ENCODE measurements at regions of chr1 and their contacts with region 1.

Region 1: DNA sequence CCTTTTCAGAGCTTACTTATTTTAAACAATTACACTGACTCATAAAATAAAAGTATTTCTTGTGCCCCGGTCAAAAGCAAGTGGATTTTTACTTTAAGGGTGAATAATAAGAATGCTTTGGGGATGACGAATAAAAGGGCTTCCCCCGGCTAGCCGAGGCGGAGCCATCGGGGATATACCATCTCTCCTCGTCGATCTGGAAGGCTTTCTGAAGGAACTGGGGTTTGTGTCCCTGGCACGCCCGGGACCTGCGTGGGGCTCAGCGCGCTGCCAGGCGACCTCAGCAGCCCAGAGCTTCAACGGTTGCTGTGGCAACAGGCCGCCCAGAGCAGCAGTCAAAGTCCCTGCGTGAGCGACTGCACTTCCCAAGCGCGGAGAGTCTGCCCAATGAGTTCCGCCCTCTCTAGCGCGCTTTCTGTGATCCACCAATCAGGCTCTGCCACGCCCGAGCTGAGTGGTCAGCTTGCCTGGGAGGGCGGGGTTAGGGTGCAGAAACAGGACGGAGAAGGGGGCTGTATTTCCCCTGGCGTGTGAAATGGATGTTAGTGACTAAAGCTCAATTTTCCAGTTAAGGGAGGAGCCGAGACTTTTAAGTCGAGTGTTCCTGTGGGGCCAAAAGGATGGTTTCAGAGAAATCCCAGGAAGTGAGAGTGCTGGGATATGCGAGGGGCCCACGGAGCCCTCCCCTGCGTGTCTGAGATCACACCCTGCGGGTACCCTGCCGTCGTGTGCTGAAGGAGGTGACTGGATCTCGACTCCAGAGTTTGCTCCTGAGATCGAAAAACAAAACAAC is 33.0 kb upstream of the MGST3 start:
- DNase-seq: peak; percentile 94
- H3K4me3 Mint-ChIP-seq: peak overlapping the region; percentile 86
- H3K27ac Mint-ChIP-seq: peak overlapping the region; percentile 93
- H3K4me1 Mint-ChIP-seq: peaks cover 45% of the 10 kb centered on the region
- H3K27me3 Mint-ChIP-seq: peaks cover 43% of the 10 kb centered on the region

Region 2: GRCh38 chr1:165367375-165367993 is 230.6 kb before region 1 on chr1:
- intact Hi-C with region 1: loop called (anchors 1 kb)
- DNase-seq: peak; percentile 48
- H3K4me3 Mint-ChIP-seq: no peak overlapping the region
- H3K27ac Mint-ChIP-seq: no peak overlapping the region
- H3K4me1 Mint-ChIP-seq: no peaks in the 10 kb centered on the region
- H3K27me3 Mint-ChIP-seq: peaks cover 27% of the 10 kb centered on the region

Region 3: GRCh38 chr1:165403835-165404482 is 194.1 kb before region 1 on chr1:
- intact Hi-C with region 1: loop called (anchors 1 kb)
- DNase-seq: peak; percentile 21
- H3K4me3 Mint-ChIP-seq: no peak overlapping the region
- H3K27ac Mint-ChIP-seq: no peak overlapping the region
- H3K4me1 Mint-ChIP-seq: peaks cover 4% of the 10 kb centered on the region
- H3K27me3 Mint-ChIP-seq: peaks cover 45% of the 10 kb centered on the region

Region 4: GRCh38 chr1:165630629-165631341 is 32.7 kb after region 1 on chr1 and contains the start of gene MGST3:
- intact Hi-C with region 1: loop called (anchors 1 kb)
- DNase-seq: peak; percentile 92
- H3K4me3 Mint-ChIP-seq: no peak within 1 kb of the TSS
- H3K27ac Mint-ChIP-seq: no peak within 1 kb of the TSS
- H3K4me1 Mint-ChIP-seq: peaks cover 13% of the 10 kb centered on the region
- H3K27me3 Mint-ChIP-seq: peaks cover 9% of the 10 kb centered on the region
- total RNA-seq, gene MGST3: 23.3 and 25.1 TPM in 2 replicates

Region 5: GRCh38 chr1:165768513-165769394 is 170.7 kb after region 1 on chr1 and contains the start of gene TMCO1:
- intact Hi-C with region 1: loop called (anchors 1 kb)
- DNase-seq: peak; percentile 94
- H3K4me3 Mint-ChIP-seq: peak within 1 kb of the TSS; percentile 99
- H3K27ac Mint-ChIP-seq: peak within 1 kb of the TSS; percentile 100
- H3K4me1 Mint-ChIP-seq: peaks cover 53% of the 10 kb centered on the region
- H3K27me3 Mint-ChIP-seq: no peaks in the 10 kb centered on the region
- total RNA-seq, gene TMCO1: 97.1 and 102 TPM in 2 replicates

Region 6: DNA sequence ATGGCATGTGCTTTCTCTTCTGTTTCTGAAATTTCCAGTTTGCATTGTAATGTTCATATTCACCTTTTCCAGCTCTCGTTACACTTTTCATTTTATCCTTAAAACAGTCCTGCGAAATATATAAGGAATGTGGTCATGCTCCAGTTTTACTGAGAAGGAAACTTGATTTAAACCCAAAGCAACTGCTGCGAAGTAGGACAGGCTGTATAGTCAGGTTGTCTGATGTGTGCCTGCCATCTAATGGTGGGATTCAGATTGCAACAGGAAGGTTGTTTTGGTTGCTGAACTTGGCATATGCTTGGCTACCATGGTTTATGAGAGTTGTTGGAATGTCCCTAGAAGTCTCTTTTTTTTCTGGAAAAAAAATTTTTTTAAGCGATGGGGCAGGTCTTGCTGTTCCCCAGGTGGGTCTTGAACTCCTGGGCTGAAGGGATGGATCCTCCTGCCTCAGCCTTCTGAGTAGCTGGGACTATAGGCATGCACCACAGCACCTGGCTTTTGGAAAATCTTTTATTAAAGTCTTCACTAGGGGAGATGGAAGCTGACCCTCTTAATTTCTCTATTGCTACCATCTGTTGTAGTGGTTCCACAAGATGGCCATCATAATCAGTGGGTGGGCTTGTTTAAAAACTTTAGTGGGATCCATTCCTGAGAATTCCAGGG is 316.2 kb after region 1 on chr1:
- intact Hi-C with region 1: loop called (anchors 1 kb)
- DNase-seq: peak; percentile 52
- H3K4me3 Mint-ChIP-seq: no peak overlapping the region
- H3K27ac Mint-ChIP-seq: no peak overlapping the region
- H3K4me1 Mint-ChIP-seq: no peaks in the 10 kb centered on the region
- H3K27me3 Mint-ChIP-seq: no peaks in the 10 kb centered on the region

Region 7: GRCh38 chr1:166133276-166133841 is 535.3 kb after region 1 on chr1:
- intact Hi-C with region 1: no loop called
- DNase-seq: no peak
- H3K4me3 Mint-ChIP-seq: no peak overlapping the region
- H3K27ac Mint-ChIP-seq: no peak overlapping the region
- H3K4me1 Mint-ChIP-seq: no peaks in the 10 kb centered on the region
- H3K27me3 Mint-ChIP-seq: peaks cover 3% of the 10 kb centered on the region

Region 8: GRCh38 chr1:166489670-166490436 is 891.8 kb after region 1 on chr1:
- intact Hi-C with region 1: loop called (anchors 10 kb)
- DNase-seq: peak; percentile 40
- H3K4me3 Mint-ChIP-seq: no peak overlapping the region
- H3K27ac Mint-ChIP-seq: no peak overlapping the region
- H3K4me1 Mint-ChIP-seq: peaks cover 15% of the 10 kb centered on the region
- H3K27me3 Mint-ChIP-seq: no peaks in the 10 kb centered on the region

Measured in activated T-helper 1 cell treated with anti-CD3 and anti-CD28 coated beads, Interleukin-12 subunit alpha, Interleukin-12 subunit beta, Interleukin-2, Interleukin-4 antibody, amounts not matched to agents 30 ng/mL and 10 ng/mL and 1 ng/mL, durations not matched to agents 14 hours and 24 hours and 36 hours (primary cell).